Mammary epithelial cell (primary cell): ENCODE measurements at regions of chr10 and their contacts with region 1.

Region 1: GRCh38 chr10:69649786-69650555 is 19.9 kb downstream of the FAM241B start:
- DNase-seq: no peak
- H3K4me3 ChIP-seq: no peak overlapping the region
- H3K27ac ChIP-seq: no peak overlapping the region
- H3K4me1 ChIP-seq: peaks cover under 1% of the 10 kb centered on the region
- H3K27me3 ChIP-seq: no peaks in the 10 kb centered on the region
- CTCF ChIP-seq: peak in 1 of 2 donors; percentile 11

Region 2: GRCh38 chr10:69710008-69710888 is 60.3 kb after region 1 on chr10:
- CTCF ChIA-PET with region 1: interaction called, 6 read pairs
- dilution Hi-C with region 1: loop called (anchors 5 kb)
- in situ Hi-C with region 1: loop called in 1 of 2 experiments (anchors 5 kb)
- intact Hi-C with region 1: no loop called
- DNase-seq: no peak
- H3K4me3 ChIP-seq: no peak overlapping the region
- H3K27ac ChIP-seq: no peak overlapping the region
- H3K4me1 ChIP-seq: no peaks in the 10 kb centered on the region
- H3K27me3 ChIP-seq: no peaks in the 10 kb centered on the region
- CTCF ChIP-seq: no peak